ENCODE measurements at regions of chr12 and their contacts with region 1.

Region 1: GRCh38 chr12:56461235-56462159 is 6.9 kb upstream of the SPRYD4 start:
- DNase-seq: peak; percentile 24
- H3K4me3 ChIP-seq: no peak overlapping the region
- H3K27ac ChIP-seq: no peak overlapping the region
- H3K4me1 ChIP-seq: no peaks in the 10 kb centered on the region
- H3K27me3 ChIP-seq: no peaks in the 10 kb centered on the region
- CTCF ChIP-seq: no peak

Region 2: DNA sequence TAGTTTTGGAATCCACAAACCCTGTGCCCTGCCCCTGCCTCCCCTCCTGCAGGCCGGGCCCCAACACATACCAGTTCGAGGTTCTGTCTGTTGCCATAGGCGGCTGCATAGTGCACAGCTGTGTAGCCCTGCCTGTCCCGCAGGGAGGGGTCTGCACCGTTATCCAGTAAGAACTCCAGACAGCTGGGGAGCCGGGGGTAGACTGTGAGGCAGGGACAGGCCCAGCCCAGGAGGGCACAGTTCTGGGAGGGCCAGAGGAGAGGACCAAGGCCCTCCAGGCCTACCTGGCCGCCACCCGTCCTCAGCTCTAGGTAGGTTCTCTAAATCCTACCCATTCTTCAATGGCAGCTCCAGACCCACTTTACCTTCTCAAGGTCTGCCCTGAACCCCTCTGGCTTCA is 212.8 kb before region 1 on chr12:
- CTCF ChIA-PET with region 1: no interaction called
- dilution Hi-C with region 1: no loop called
- in situ Hi-C with region 1: no loop called
- intact Hi-C with region 1: no loop called
- DNase-seq: no peak
- H3K4me3 ChIP-seq: no peak overlapping the region
- H3K27ac ChIP-seq: no peak overlapping the region
- H3K4me1 ChIP-seq: no peaks in the 10 kb centered on the region
- H3K27me3 ChIP-seq: no peaks in the 10 kb centered on the region
- CTCF ChIP-seq: no peak

Region 3: DNA sequence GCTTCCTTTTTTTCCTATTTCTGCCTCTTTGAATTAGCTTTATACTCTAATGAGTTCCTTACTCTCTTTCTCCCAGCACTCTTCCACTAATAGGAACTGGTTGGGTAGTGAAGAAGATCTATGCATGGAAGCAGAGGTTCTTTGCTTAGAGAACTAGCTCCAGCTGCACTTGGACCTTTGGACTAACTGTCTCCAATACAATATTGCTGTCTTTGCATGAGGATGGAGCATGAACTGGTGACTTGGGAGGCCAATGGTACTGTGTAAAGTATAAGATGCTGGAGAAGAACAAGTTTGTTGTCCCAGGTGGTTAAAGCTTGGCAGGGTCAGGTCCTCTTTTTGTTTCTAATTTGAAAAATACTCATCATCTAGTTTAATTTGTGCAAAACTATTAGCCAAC is 28.9 kb after region 1 on chr12:
- CTCF ChIA-PET with region 1: no interaction called
- dilution Hi-C with region 1: loop called (anchors 5 kb)
- in situ Hi-C with region 1: no loop called
- intact Hi-C with region 1: no loop called
- DNase-seq: no peak
- H3K4me3 ChIP-seq: no peak overlapping the region
- H3K27ac ChIP-seq: no peak overlapping the region
- H3K4me1 ChIP-seq: peaks cover 16% of the 10 kb centered on the region
- H3K27me3 ChIP-seq: no peaks in the 10 kb centered on the region
- CTCF ChIP-seq: no peak